IMR-90 (cell line): ENCODE measurements at regions of chr4 and their contacts with region 1.

Region 1: DNA sequence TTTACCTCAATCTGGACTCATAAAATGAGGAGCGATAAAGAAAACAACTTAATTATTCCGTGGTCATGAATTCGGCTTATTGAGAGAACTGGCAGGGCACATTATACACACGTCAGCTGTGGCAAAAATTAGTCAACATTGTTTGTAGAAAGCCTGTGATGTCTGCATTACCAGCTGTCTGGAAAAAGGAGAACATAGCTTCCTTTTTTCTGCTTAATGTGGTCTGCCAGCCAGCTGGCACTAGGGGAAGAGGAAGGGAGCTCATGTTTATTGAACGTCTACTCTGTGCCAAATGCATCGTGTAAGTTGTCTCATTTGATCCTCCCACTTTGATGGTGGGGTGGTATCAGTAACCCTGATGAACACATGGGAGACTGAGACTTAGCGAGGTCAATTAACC is 367.6 kb downstream of the ARHGAP24 start:
- DNase-seq: peak; percentile 20
- ATAC-seq: no peak; the same call in 1 of the 2 replicates
- H3K4me3 ChIP-seq: no peak overlapping the region
- H3K27ac ChIP-seq: no peak overlapping the region
- H3K4me1 ChIP-seq: no peaks in the 10 kb centered on the region
- H3K27me3 ChIP-seq: no peaks in the 10 kb centered on the region
- CTCF ChIP-seq: no peak
- POLR2A ChIP-seq: no peak
- RAD21 ChIP-seq: no peak

Region 2: GRCh38 chr4:85617202-85617601 is 225.3 kb before region 1 on chr4:
- CTCF ChIA-PET with region 1: no interaction called
- POLR2A ChIA-PET with region 1: no interaction called
- dilution Hi-C with region 1: no loop called
- in situ Hi-C with region 1: no loop called
- intact Hi-C with region 1: no loop called
- DNase-seq: no peak
- ATAC-seq: no peak
- H3K4me3 ChIP-seq: no peak overlapping the region
- H3K27ac ChIP-seq: no peak overlapping the region
- H3K4me1 ChIP-seq: no peaks in the 10 kb centered on the region
- H3K27me3 ChIP-seq: no peaks in the 10 kb centered on the region
- CTCF ChIP-seq: no peak
- POLR2A ChIP-seq: no peak
- RAD21 ChIP-seq: no peak

Region 3: DNA sequence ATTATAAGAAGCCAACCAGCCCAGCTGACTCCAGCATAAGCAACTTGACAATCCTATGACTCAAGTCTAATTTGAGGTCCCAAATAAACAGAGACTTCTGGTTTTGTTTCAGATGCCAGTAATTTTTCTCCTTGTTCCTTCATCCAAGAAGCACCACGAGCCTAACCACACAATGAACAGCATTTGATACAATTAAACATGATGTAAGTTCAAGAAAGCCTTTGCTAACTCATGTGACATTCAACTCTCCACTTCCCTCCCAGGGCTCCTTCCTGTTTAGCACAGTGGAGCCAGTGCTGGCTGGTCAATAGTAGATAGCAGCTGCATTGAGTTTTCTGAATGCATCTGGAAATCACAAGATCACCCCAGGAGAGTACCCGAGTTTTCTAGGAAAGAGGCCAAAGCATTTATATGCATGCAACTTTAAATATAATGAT is 161.3 kb before region 1 on chr4:
- CTCF ChIA-PET with region 1: no interaction called
- POLR2A ChIA-PET with region 1: no interaction called
- dilution Hi-C with region 1: no loop called
- in situ Hi-C with region 1: no loop called
- intact Hi-C with region 1: no loop called
- DNase-seq: peak; percentile 49
- ATAC-seq: no peak
- H3K4me3 ChIP-seq: no peak overlapping the region
- H3K27ac ChIP-seq: no peak overlapping the region
- H3K4me1 ChIP-seq: no peaks in the 10 kb centered on the region; the same call in 1 of the 2 replicates
- H3K27me3 ChIP-seq: no peaks in the 10 kb centered on the region
- CTCF ChIP-seq: no peak
- POLR2A ChIP-seq: no peak
- RAD21 ChIP-seq: no peak

Region 4: DNA sequence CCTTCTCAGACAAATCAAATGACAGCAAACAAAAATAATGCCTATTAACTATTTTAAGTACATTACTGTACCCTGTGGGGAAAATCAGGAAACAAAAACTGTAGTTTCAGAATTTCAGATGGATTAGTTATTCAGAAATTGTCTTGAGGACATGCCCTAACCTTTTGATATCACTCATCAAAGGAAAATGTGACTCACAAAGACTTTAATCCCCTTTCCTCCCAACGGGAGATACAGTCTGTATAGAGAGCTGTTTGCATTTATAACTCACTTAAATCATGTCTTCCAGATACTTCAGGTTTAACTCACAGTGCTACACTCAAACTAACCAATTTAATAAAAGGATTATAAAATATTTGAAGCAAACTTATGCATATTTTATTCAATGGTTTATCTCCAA is 213.4 kb after region 1 on chr4:
- CTCF ChIA-PET with region 1: no interaction called
- POLR2A ChIA-PET with region 1: no interaction called
- dilution Hi-C with region 1: no loop called
- in situ Hi-C with region 1: no loop called
- intact Hi-C with region 1: no loop called
- DNase-seq: peak; percentile 18
- ATAC-seq: no peak
- H3K4me3 ChIP-seq: no peak overlapping the region
- H3K27ac ChIP-seq: no peak overlapping the region
- H3K4me1 ChIP-seq: no peaks in the 10 kb centered on the region
- H3K27me3 ChIP-seq: no peaks in the 10 kb centered on the region
- CTCF ChIP-seq: no peak
- POLR2A ChIP-seq: no peak
- RAD21 ChIP-seq: no peak

Region 5: GRCh38 chr4:87192145-87192919 is 1349.8 kb after region 1 on chr4:
- CTCF ChIA-PET with region 1: no interaction called
- POLR2A ChIA-PET with region 1: no interaction called
- dilution Hi-C with region 1: no loop called
- in situ Hi-C with region 1: no loop called
- intact Hi-C with region 1: loop called (anchors 5 kb)
- DNase-seq: no peak
- ATAC-seq: no peak
- H3K4me3 ChIP-seq: no peak overlapping the region
- H3K27ac ChIP-seq: no peak overlapping the region
- H3K4me1 ChIP-seq: peaks cover 3% of the 10 kb centered on the region; the same call in 1 of the 2 replicates
- H3K27me3 ChIP-seq: no peaks in the 10 kb centered on the region
- CTCF ChIP-seq: no peak
- POLR2A ChIP-seq: no peak
- RAD21 ChIP-seq: no peak